ENCODE measurements at regions of chr12 and their contacts with region 1.

Region 1: DNA sequence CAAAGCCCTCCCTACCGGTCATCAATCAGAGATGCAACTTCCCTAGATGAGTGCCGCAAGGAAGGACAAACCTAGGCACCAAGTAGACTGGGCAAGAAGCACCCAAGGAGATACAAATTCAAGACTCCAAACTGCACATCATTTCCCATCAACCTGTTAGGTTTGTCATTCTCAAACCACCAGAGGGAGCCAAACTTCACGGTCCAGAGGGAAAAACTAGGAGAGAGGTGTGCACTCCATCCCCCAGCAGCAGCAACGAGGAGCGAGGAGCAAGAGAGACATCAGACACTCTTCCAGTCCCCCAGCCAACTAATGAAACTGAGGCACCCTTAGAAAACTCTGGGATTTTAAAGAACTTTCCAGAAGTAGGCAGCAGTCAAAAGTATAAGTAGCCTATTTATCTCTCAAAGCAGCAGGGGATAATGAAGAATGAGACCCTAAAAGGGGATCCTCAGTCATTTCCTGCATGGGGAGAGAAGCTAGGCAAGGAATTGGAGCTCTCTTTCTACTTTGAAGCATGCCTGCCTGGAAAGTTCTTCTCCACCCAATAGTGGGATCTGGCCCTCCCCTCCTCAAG is 37.0 kb upstream of the NT5DC3 start:
- DNase-seq: peak in 1 of 3 donors; percentile 23
- ATAC-seq: peak; percentile 60 to 84
- H3K4me3 ChIP-seq: no peak overlapping the region
- H3K27ac ChIP-seq: no peak overlapping the region
- H3K4me1 ChIP-seq: no peaks in the 10 kb centered on the region
- H3K27me3 ChIP-seq: no peaks in the 10 kb centered on the region

Region 2: DNA sequence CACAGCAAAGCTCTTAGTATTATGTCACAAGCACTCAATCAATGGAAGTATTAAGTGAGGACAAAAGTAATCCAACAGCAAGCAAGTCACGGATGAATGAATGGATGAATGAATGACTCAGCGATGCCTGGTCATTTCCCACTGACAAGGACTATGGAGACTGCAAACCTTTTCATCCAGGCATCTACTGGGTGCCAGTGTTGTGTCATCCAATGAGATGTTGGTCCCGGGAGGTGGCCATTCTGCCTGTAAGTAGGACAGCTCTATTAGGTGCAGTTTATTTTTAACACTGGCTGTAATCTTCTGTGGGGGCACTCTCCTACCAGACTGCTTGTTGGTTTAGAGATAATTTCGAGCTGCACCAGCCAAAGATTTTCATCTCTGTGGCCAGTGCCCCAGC is 251.5 kb before region 1 on chr12:
- intact Hi-C with region 1: loop called in 1 of 4 experiments (anchors 10 kb)
- DNase-seq: peak; percentile 34 to 73 (median 65)
- ATAC-seq: peak; percentile 83 to 85
- H3K4me3 ChIP-seq: no peak overlapping the region
- H3K27ac ChIP-seq: peak overlapping the region; percentile 93
- H3K4me1 ChIP-seq: peaks cover 5% of the 10 kb centered on the region
- H3K27me3 ChIP-seq: no peaks in the 10 kb centered on the region

Measured in right cardiac atrium (tissue), 5 donors.